ENCODE measurements at regions of chr2 and their contacts with region 1.

Region 1: GRCh38 chr2:163610817-163611556 is 124.8 kb downstream of the FIGN start:
- DNase-seq: no peak
- ATAC-seq: no peak
- H3K4me3 ChIP-seq: no peak overlapping the region
- H3K4me3 Mint-ChIP-seq: no peak overlapping the region
- H3K27ac ChIP-seq: no peak overlapping the region
- H3K27ac Mint-ChIP-seq: no peak overlapping the region
- H3K4me1 ChIP-seq: no peaks in the 10 kb centered on the region
- H3K4me1 Mint-ChIP-seq: no peaks in the 10 kb centered on the region
- H3K27me3 ChIP-seq: no peaks in the 10 kb centered on the region
- H3K27me3 Mint-ChIP-seq: no peaks in the 10 kb centered on the region
- CTCF ChIP-seq: no peak

Region 2: DNA sequence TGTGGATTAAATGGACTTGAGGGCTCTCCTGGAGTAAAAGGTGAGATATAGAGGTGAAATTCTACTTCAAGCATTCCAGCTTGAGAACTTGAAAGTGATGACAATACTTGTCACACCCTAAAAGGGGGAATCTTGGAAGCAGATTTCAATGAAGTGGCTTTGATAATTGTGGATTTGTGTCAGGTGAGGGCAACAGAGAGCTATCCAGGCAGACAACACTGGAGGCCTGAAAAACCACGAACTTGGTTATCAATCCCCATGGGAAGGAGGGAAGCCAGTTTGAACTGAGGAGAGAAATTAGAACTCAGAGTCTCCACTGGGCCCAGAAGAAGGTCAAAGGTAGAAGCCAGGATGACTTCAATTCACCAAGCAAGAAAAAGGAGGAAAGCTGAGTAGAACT is 139.0 kb before region 1 on chr2:
- CTCF ChIA-PET with region 1: no interaction called
- POLR2A ChIA-PET with region 1: no interaction called
- intact Hi-C with region 1: no loop called
- DNase-seq: no peak
- ATAC-seq: no peak
- H3K4me3 ChIP-seq: no peak overlapping the region
- H3K4me3 Mint-ChIP-seq: no peak overlapping the region
- H3K27ac ChIP-seq: no peak overlapping the region
- H3K27ac Mint-ChIP-seq: no peak overlapping the region
- H3K4me1 ChIP-seq: no peaks in the 10 kb centered on the region
- H3K4me1 Mint-ChIP-seq: no peaks in the 10 kb centered on the region
- H3K27me3 ChIP-seq: no peaks in the 10 kb centered on the region
- H3K27me3 Mint-ChIP-seq: no peaks in the 10 kb centered on the region
- CTCF ChIP-seq: no peak

Region 3: DNA sequence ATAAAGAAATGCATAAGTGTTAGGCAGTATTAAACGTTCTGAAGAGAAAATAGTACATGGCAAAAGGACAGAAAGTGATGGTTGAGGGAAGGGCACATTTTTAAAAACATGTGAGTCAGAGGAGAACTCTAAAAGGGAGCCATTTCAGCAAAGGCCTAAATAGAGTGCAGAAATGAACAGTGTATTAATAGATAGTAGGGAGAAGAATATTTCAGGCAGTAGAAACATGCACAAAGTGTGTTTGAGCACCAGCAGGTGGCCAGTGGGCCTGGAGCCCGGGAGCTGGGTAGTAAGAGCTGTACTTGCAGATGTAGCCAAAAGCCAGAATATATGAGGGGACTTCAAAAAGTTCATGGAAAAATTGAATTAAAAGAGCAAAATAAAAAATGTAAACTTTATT is 412.9 kb after region 1 on chr2:
- CTCF ChIA-PET with region 1: no interaction called
- POLR2A ChIA-PET with region 1: no interaction called
- intact Hi-C with region 1: loop called in 1 of 2 experiments (anchors 5 kb)
- DNase-seq: no peak
- ATAC-seq: no peak
- H3K4me3 ChIP-seq: no peak overlapping the region
- H3K4me3 Mint-ChIP-seq: no peak overlapping the region
- H3K27ac ChIP-seq: no peak overlapping the region
- H3K27ac Mint-ChIP-seq: no peak overlapping the region
- H3K4me1 ChIP-seq: no peaks in the 10 kb centered on the region
- H3K4me1 Mint-ChIP-seq: no peaks in the 10 kb centered on the region
- H3K27me3 ChIP-seq: no peaks in the 10 kb centered on the region
- H3K27me3 Mint-ChIP-seq: no peaks in the 10 kb centered on the region
- CTCF ChIP-seq: no peak

Measured in CD4-positive, alpha-beta T cell (primary cell).